K562 (cell line): ENCODE measurements at regions of chr16 and their contacts with region 1.

Region 1: GRCh38 chr16:30934827-30935557 is 11.6 kb downstream of the FBXL19 start:
- DNase-seq: peak; percentile 61 to 79 (median 72)
- ATAC-seq: peak; percentile 96
- H3K4me3 ChIP-seq: no peak overlapping the region
- H3K27ac ChIP-seq: peak overlapping the region; percentile 21; the same call in 2 of the 3 replicates
- H3K4me1 ChIP-seq: peaks cover 0 to 6% of the 10 kb centered on the region in 2 experiments; a peak in 3 of 5 replicates
- H3K27me3 ChIP-seq: no peaks in the 10 kb centered on the region
- CTCF ChIP-seq: peak; percentile 82 to 95 (median 85)
- EP300 ChIP-seq: no peak
- POLR2A ChIP-seq: 0 out of 2 replicates have a peak, but pooled peaks have one; percentile 29
- RAD21 ChIP-seq: peak; percentile 66 to 80

Region 2: DNA sequence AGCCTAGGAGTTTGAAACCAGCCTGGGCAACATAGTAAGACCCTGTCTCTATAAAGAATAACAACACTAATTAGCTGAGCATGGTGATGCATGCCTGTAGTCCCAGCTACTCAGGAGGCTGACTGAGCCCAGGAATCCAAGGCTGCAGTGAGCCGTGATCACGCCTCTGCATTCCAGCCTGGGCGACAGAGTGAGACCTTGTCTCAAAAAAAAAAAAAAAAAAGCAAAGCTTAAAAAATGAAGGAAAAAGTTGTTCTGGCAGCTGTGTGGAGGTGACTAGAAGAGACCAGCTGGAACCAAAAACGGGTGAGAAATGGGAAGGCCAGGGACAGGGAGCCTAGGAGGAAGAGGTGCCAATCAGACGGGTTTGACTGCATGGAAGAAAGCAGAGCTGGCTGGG is 45.3 kb before region 1 on chr16:
- CTCF ChIA-PET with region 1: no interaction called
- POLR2A ChIA-PET with region 1: no interaction called
- in situ Hi-C with region 1: no loop called
- intact Hi-C with region 1: no loop called
- DNase-seq: no peak
- ATAC-seq: no peak
- H3K4me3 ChIP-seq: no peak overlapping the region
- H3K27ac ChIP-seq: no peak overlapping the region
- H3K4me1 ChIP-seq: peaks cover 16 to 27% of the 10 kb centered on the region in 2 experiments
- H3K27me3 ChIP-seq: no peaks in the 10 kb centered on the region
- CTCF ChIP-seq: no peak
- EP300 ChIP-seq: no peak
- POLR2A ChIP-seq: no peak
- RAD21 ChIP-seq: no peak

Region 3: GRCh38 chr16:30948667-30949649 is 14.0 kb after region 1 on chr16 and contains the start of gene ORAI3:
- CTCF ChIA-PET with region 1: no interaction called
- POLR2A ChIA-PET with region 1: interaction called, 11 read pairs
- in situ Hi-C with region 1: no loop called
- intact Hi-C with region 1: loop called (anchors 2 kb)
- DNase-seq: peak; percentile 69 to 82 (median 72)
- ATAC-seq: peak; percentile 79
- H3K4me3 ChIP-seq: peak within 1 kb of the TSS; percentile 83
- H3K27ac ChIP-seq: peak within 1 kb of the TSS; percentile 87
- H3K4me1 ChIP-seq: peaks cover 26 to 55% of the 10 kb centered on the region in 2 experiments
- H3K27me3 ChIP-seq: no peaks in the 10 kb centered on the region
- CTCF ChIP-seq: no peak
- EP300 ChIP-seq: peak; percentile 10; the same call in 1 of the 2 replicates
- POLR2A ChIP-seq: peak; percentile 73
- RAD21 ChIP-seq: no peak; a peak in 1 of 4 replicates
- polyA plus RNA-seq, gene ORAI3: 4.9 to 5.8 TPM